Sciatic nerve (tissue), 2 donors: ENCODE measurements at regions of chr2 and their contacts with region 1.

Region 1: GRCh38 chr2:144849612-144850011 is 329.7 kb upstream of the ZEB2 start:
- DNase-seq: no peak
- ATAC-seq: no peak

Region 2: GRCh38 chr2:145253492-145253891 is 403.9 kb after region 1 on chr2:
- intact Hi-C with region 1: no loop called
- DNase-seq: no peak
- ATAC-seq: no peak

Region 3: GRCh38 chr2:145356056-145356455 is 506.4 kb after region 1 on chr2:
- intact Hi-C with region 1: loop called (anchors 5 kb)
- DNase-seq: no peak
- ATAC-seq: no peak

Region 4: GRCh38 chr2:146481629-146482028 is 1632.0 kb after region 1 on chr2:
- intact Hi-C with region 1: no loop called
- DNase-seq: no peak
- ATAC-seq: no peak